Activated CD4-positive, alpha-beta memory T cell treated with anti-CD3 and anti-CD28 coated beads for 36 hours (primary cell): ENCODE measurements at regions of chr1 and their contacts with region 1.

Region 1: GRCh38 chr1:41416552-41417334 is 55.5 kb downstream of the FOXO6 start:
- DNase-seq: peak; percentile 70
- H3K4me3 Mint-ChIP-seq: no peak overlapping the region
- H3K27ac Mint-ChIP-seq: no peak overlapping the region
- H3K4me1 Mint-ChIP-seq: no peaks in the 10 kb centered on the region
- H3K27me3 Mint-ChIP-seq: peaks cover 7% of the 10 kb centered on the region

Region 2: DNA sequence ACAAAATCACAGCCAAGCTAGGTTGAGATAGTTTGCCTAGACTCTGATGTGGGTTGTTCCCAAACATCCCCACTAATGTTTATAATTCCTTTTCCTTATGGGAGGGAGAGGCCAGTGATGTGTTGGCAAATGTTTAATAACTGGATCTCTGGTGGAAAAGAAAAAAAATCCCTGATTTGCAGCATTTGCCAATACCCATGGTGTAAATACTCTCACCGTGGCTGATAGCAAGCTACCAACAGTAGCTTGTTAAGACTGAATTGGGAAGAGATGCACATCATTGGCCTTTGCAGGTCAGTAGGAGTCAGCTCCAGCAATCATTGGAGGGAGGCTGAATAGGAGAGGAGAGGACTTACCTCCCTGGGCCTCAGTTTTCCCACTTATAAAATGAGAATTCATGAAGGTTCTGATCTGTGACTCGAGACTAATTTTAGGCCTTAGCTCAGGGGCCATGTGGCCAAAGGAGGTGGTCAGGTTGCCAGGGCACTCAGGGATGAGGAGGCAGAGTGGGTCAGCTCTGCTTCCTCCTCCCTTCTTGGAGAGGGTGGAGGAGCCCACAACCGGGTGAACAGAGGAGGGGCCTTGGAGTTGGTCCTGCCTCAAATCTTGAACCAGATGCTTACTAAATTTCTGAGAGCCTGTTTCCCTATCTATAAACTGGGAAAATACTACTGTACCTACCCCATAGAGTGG is 154.7 kb before region 1 on chr1:
- CTCF ChIA-PET with region 1: interaction called, 10 read pairs
- POLR2A ChIA-PET with region 1: no interaction called
- intact Hi-C with region 1: no loop called
- DNase-seq: no peak
- H3K4me3 Mint-ChIP-seq: no peak overlapping the region
- H3K27ac Mint-ChIP-seq: no peak overlapping the region
- H3K4me1 Mint-ChIP-seq: no peaks in the 10 kb centered on the region
- H3K27me3 Mint-ChIP-seq: peaks cover 9% of the 10 kb centered on the region

Region 3: DNA sequence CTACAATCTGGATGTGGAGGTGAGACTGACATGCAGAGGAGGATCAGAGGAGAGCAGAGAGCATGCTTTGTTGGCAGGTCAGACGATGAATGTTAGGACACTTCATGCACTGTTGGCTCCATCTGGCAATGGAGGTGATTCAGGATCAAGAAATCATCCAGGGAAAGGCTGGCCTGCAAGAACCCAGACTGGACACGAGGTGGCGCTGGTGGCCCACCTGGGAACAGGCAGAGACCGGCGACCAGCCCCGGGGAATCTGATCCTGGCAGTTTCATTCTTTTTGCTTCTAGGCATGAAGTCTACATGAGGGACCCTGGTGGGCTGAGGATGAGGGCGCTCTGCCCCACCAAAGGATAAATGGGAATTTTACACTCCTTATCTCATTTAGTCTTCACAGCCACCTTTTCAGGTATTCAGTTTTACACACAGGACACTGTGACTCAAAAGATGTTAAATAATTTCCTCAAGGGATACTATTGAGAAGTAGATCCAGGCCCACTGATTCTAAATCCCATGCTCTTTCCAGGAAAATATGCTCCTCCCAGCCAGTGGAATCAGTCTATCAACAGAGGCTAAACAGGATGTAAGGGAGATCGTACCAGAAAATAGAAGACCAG is 148.5 kb before region 1 on chr1:
- CTCF ChIA-PET with region 1: interaction called, 10 read pairs
- POLR2A ChIA-PET with region 1: no interaction called
- intact Hi-C with region 1: loop called (anchors 1 kb)
- DNase-seq: peak; percentile 71
- H3K4me3 Mint-ChIP-seq: no peak overlapping the region
- H3K27ac Mint-ChIP-seq: no peak overlapping the region
- H3K4me1 Mint-ChIP-seq: no peaks in the 10 kb centered on the region
- H3K27me3 Mint-ChIP-seq: no peaks in the 10 kb centered on the region

Region 4: DNA sequence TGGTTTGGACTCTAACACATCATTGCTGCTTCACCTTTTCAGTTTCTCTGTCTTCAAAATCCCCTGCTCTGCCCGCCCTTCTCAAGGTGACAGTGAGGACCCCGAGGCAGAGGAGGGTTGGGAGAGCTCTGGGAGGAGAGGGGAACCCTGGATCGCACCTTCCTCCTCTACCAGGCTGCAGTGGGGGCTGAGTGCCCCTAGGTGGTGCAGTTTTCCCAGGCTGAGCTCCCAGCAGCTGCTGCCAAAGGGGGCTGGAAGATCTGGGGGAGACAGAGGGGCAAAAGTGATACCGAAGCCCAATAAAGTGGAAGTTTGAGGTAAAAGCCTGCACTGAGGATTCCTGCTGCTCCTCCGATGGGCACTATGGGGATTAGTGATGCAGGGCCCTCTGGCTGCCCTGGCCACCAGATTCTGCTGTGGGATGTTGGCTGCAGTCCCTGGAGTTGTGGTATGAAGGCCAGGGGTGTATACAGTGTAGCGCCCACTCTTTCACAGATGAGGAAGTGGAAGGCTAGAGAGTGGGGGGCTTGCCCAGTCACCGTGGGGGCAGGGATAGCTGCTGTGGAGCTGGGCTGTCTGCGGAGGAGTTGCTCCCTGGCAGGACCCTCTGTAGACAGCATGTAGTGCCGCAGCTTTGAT is 133.9 kb before region 1 on chr1:
- CTCF ChIA-PET with region 1: interaction called, 39 read pairs
- POLR2A ChIA-PET with region 1: no interaction called
- intact Hi-C with region 1: loop called (anchors 5 kb)
- DNase-seq: peak; percentile 38
- H3K4me3 Mint-ChIP-seq: no peak overlapping the region
- H3K27ac Mint-ChIP-seq: no peak overlapping the region
- H3K4me1 Mint-ChIP-seq: no peaks in the 10 kb centered on the region
- H3K27me3 Mint-ChIP-seq: peaks cover 32% of the 10 kb centered on the region

Region 5: GRCh38 chr1:41313661-41314131 is 103.0 kb before region 1 on chr1:
- CTCF ChIA-PET with region 1: interaction called, 10 read pairs
- POLR2A ChIA-PET with region 1: no interaction called
- intact Hi-C with region 1: no loop called
- DNase-seq: peak; percentile 27
- H3K4me3 Mint-ChIP-seq: no peak overlapping the region
- H3K27ac Mint-ChIP-seq: no peak overlapping the region
- H3K4me1 Mint-ChIP-seq: no peaks in the 10 kb centered on the region
- H3K27me3 Mint-ChIP-seq: peaks cover 2% of the 10 kb centered on the region

Region 6: GRCh38 chr1:41322835-41323627 is 93.7 kb before region 1 on chr1:
- CTCF ChIA-PET with region 1: interaction called, 34 read pairs
- POLR2A ChIA-PET with region 1: no interaction called
- intact Hi-C with region 1: loop called (anchors 1 kb)
- DNase-seq: peak; percentile 47
- H3K4me3 Mint-ChIP-seq: no peak overlapping the region
- H3K27ac Mint-ChIP-seq: no peak overlapping the region
- H3K4me1 Mint-ChIP-seq: no peaks in the 10 kb centered on the region
- H3K27me3 Mint-ChIP-seq: peaks cover 2% of the 10 kb centered on the region

Region 7: GRCh38 chr1:41432481-41433280 is 15.9 kb after region 1 on chr1:
- CTCF ChIA-PET with region 1: interaction called, 35 read pairs
- POLR2A ChIA-PET with region 1: no interaction called
- intact Hi-C with region 1: no loop called
- DNase-seq: peak; percentile 87
- H3K4me3 Mint-ChIP-seq: no peak overlapping the region
- H3K27ac Mint-ChIP-seq: no peak overlapping the region
- H3K4me1 Mint-ChIP-seq: no peaks in the 10 kb centered on the region
- H3K27me3 Mint-ChIP-seq: peaks cover 26% of the 10 kb centered on the region

Region 8: GRCh38 chr1:41516168-41517061 is 99.7 kb after region 1 on chr1:
- CTCF ChIA-PET with region 1: no interaction called
- POLR2A ChIA-PET with region 1: no interaction called
- intact Hi-C with region 1: no loop called
- DNase-seq: peak; percentile 78
- H3K4me3 Mint-ChIP-seq: no peak overlapping the region
- H3K27ac Mint-ChIP-seq: peak overlapping the region; percentile 20
- H3K4me1 Mint-ChIP-seq: peaks cover 6% of the 10 kb centered on the region
- H3K27me3 Mint-ChIP-seq: no peaks in the 10 kb centered on the region

Region 9: GRCh38 chr1:41558761-41559171 is 142.0 kb after region 1 on chr1:
- CTCF ChIA-PET with region 1: no interaction called
- POLR2A ChIA-PET with region 1: no interaction called
- intact Hi-C with region 1: no loop called
- DNase-seq: peak; percentile 4
- H3K4me3 Mint-ChIP-seq: no peak overlapping the region
- H3K27ac Mint-ChIP-seq: no peak overlapping the region
- H3K4me1 Mint-ChIP-seq: peaks cover 4% of the 10 kb centered on the region
- H3K27me3 Mint-ChIP-seq: no peaks in the 10 kb centered on the region

Region 10: DNA sequence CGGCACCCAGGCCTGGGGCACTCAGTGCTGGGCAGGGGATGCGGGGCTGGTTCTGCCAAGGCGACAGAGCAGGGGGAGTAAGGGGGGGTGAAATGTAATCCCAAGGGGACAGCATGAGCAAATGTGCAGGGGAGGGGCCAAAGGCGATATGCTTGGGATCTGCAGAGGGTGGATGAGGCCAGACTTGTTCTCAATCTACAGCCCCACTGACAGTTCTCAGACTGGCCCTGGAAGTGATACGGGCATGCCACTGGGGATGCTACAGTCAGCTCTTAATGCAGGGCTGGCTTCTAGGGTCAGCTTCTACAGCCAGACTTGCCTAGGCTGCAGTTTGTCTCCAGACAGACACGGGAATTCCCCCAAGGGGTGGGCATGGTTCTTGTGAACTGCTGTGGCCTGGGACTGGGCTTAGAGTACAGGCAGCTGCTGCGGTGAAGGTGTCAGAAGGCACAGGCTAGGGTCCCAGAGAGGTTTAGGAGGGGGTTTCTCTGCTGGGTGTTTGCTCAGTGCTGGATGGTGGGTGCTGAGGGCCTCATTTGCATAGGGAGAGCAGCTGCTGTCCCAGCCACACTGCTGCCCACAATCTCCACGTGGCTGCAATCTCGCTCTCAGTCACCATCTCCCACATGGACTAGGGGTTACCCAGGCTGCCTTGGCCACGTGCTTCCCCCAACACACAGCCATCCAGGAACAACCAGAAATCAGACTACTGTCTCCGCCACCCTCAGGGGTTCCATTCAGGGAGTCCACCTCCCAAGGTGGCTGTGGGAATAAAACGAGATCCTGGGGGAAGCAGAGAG is 311.9 kb after region 1 on chr1:
- CTCF ChIA-PET with region 1: no interaction called
- POLR2A ChIA-PET with region 1: no interaction called
- intact Hi-C with region 1: no loop called
- DNase-seq: peak; percentile 89
- H3K4me3 Mint-ChIP-seq: no peak overlapping the region
- H3K27ac Mint-ChIP-seq: peak overlapping the region; percentile 84
- H3K4me1 Mint-ChIP-seq: peaks cover 39% of the 10 kb centered on the region
- H3K27me3 Mint-ChIP-seq: no peaks in the 10 kb centered on the region